OCI-LY7 (cell line): ENCODE measurements at regions of chr3 and their contacts with region 1.

Region 1: GRCh38 chr3:31946484-31947081 is 34.5 kb downstream of the OSBPL10 start:
- DNase-seq: peak; percentile 82
- H3K4me3 ChIP-seq: peak overlapping the region; percentile 57
- H3K27ac ChIP-seq: peak overlapping the region; percentile 100
- H3K4me1 ChIP-seq: peaks cover 99% of the 10 kb centered on the region
- CTCF ChIP-seq: no peak

Region 2: GRCh38 chr3:30606301-30607031 is 1340.1 kb before region 1 on chr3 and contains the start of gene TGFBR2:
- CTCF ChIA-PET with region 1: no interaction called
- POLR2A ChIA-PET with region 1: no interaction called
- intact Hi-C with region 1: loop called (anchors 10 kb)
- DNase-seq: peak; percentile 91
- H3K4me3 ChIP-seq: peak within 1 kb of the TSS; percentile 94
- H3K27ac ChIP-seq: peak within 1 kb of the TSS; percentile 93
- H3K4me1 ChIP-seq: peaks cover 72% of the 10 kb centered on the region
- CTCF ChIP-seq: no peak; the same call in 1 of the 2 replicates
- total RNA-seq, gene TGFBR2: 28.1 and 29.6 TPM in 2 replicates

Region 3: GRCh38 chr3:31573036-31573779 is 373.4 kb before region 1 on chr3:
- CTCF ChIA-PET with region 1: no interaction called
- POLR2A ChIA-PET with region 1: no interaction called
- intact Hi-C with region 1: no loop called
- DNase-seq: no peak
- H3K4me3 ChIP-seq: no peak overlapping the region
- H3K27ac ChIP-seq: peak overlapping the region; percentile 9
- H3K4me1 ChIP-seq: peaks cover 49% of the 10 kb centered on the region
- CTCF ChIP-seq: no peak

Region 4: DNA sequence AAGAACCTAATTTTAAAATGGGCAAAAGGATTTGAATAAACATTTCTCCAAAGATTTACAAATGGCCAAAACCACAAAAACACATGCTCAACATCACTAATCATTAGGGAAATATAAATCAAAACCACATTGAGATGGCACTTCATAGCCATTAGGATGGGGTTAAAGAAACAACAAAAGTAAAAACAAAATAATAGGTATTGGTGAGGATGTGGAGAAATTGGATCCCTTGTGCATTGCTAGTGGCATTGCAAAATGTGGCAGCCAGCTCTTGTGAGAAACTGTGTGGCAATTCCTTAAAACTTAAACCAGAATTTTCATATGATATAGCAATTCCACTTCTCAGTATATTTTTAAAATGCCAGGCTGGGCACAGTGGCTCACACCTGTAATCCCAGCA is 287.3 kb before region 1 on chr3:
- CTCF ChIA-PET with region 1: no interaction called
- POLR2A ChIA-PET with region 1: no interaction called
- intact Hi-C with region 1: no loop called
- DNase-seq: no peak
- H3K4me3 ChIP-seq: no peak overlapping the region
- H3K27ac ChIP-seq: no peak overlapping the region
- H3K4me1 ChIP-seq: no peaks in the 10 kb centered on the region
- CTCF ChIP-seq: no peak

Region 5: DNA sequence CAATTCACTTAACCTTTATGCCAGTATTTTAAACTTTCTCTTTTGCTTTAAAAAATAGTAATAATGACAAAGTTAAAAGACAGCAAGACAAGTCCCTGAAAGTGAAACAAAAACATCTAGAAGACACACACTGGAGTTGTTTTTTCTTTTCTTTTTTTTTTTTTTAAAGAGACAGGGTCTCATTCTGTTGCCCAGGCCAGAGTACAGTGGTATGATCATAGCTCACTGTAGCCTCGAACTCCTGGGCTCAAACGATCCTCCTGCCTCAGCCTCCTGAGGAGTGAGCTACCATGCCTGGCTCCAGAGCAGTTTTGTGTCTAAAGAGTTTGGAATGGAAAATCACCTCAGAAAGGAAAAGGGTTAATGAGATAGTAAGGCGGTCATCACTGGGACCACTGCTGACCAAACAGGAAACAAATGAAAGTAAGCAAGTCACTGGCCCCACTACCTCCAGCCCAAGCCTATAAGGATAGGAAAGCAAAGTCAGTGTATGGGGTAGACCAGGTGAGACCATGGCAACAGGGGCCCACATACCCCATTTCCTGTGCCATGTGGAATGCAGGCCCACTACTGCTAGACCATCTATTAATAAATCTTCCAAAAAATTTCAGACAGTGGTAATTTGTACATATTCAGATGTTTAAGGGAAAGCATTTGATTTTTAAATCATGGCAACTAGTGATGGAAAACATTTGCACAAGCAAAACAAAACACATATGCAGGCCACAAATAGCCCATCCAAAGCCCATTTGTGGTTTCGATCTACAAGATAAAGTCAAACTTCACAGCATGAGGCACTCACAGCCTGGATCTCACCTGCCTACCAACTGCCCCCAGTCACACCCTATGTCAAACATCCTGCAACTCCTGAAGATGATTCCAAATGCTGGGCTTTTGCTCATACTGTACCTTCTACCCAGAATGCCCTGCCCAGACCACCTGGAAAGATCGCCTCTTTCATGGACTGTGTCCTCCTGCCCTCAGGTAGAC is 28.1 kb before region 1 on chr3:
- CTCF ChIA-PET with region 1: no interaction called
- POLR2A ChIA-PET with region 1: interaction called, 27 read pairs
- intact Hi-C with region 1: no loop called
- DNase-seq: peak; percentile 65
- H3K4me3 ChIP-seq: peak overlapping the region; percentile 64
- H3K27ac ChIP-seq: peak overlapping the region; percentile 100
- H3K4me1 ChIP-seq: peaks cover 99% of the 10 kb centered on the region
- CTCF ChIP-seq: no peak

Region 6: GRCh38 chr3:31934018-31934417 is 12.6 kb before region 1 on chr3:
- CTCF ChIA-PET with region 1: interaction called, 4 read pairs
- POLR2A ChIA-PET with region 1: interaction called, 141 read pairs
- intact Hi-C with region 1: loop called (anchors 2 kb)
- DNase-seq: peak; percentile 66
- H3K4me3 ChIP-seq: peak overlapping the region; percentile 50
- H3K27ac ChIP-seq: peak overlapping the region; percentile 94
- H3K4me1 ChIP-seq: peaks cover 99% of the 10 kb centered on the region
- CTCF ChIP-seq: no peak

Region 7: DNA sequence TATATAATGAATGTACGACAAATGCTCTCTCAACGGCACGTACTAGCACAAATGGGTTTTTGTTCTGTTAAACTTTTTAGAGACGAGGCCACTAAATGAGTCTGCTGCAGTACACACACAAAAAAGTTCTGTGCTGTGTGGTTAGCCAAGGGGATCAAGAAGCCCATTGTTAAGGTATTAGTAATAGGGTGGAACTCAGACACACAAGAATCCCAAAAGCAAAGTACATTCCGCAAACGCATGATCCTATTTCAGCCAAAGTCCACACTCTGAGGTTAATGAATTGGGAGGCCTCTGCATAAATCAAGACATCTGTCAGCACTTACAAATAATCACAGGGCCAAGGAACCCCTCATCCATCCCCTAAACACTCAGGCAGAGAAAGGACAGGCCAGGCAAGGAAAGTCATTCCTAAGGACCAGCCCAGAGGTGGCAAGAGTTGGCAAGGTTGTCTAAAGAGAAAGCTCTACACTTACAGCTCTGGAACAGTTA is 22.4 kb after region 1 on chr3:
- CTCF ChIA-PET with region 1: interaction called, 5 read pairs
- POLR2A ChIA-PET with region 1: interaction called, 35 read pairs
- intact Hi-C with region 1: no loop called
- DNase-seq: no peak
- H3K4me3 ChIP-seq: peak overlapping the region; percentile 91
- H3K27ac ChIP-seq: peak overlapping the region; percentile 88
- H3K4me1 ChIP-seq: peaks cover 88% of the 10 kb centered on the region
- CTCF ChIP-seq: no peak

Region 8: GRCh38 chr3:32285891-32286290 is 339.3 kb after region 1 on chr3:
- CTCF ChIA-PET with region 1: no interaction called
- POLR2A ChIA-PET with region 1: no interaction called
- intact Hi-C with region 1: no loop called
- DNase-seq: peak; percentile 34
- H3K4me3 ChIP-seq: no peak overlapping the region
- H3K27ac ChIP-seq: no peak overlapping the region
- H3K4me1 ChIP-seq: peaks cover 16% of the 10 kb centered on the region
- CTCF ChIP-seq: no peak